ENCODE measurements at regions of chr2 and their contacts with region 1.

Region 1: DNA sequence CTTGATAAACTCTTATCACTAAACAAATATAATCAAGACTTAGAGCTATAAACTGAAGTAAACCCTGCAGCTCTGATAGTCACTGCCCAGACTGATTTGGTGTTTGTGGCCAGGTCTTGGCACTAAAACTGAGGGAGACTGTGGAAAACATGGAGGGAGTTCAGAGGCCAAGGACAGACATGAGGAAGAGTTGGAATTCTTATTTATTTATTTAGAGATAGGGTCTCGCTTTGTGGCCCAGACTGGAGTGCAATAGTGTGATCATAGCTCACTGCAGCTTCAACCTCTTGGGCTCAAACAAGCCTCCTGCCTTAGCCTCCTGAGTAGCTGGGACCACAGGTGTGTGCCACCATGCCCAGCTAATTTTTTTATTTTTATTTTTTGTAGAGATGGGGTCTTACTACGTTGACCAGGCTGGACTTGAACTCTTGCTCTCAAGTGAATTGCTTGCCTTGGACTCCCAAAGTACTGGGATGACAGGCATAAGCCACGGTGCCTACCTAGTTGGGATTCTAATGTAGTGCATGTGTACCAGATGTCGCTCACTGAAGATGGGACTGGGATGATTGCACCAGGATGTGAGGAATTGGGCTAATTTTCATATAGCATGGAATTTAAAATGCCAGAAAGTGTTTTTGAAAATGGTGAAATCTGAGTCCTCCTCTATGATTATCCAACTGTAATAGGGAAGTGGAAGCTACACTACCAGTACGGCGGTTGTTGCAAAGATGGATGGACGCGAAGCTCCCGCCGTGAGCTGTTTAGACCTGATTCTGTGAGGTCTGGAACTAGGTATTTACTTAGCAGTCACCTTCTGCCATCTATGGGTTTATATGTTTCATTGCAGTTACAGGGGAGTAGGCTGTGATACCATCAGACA is 52.7 kb upstream of the CTLA4 start:
- DNase-seq: peak; percentile 48 to 51
- ATAC-seq: peak; percentile 59 to 92 (median 84)
- H3K4me3 ChIP-seq: peak overlapping the region in 3 of 10 donors; percentile 20 to 31 (median 28)
- H3K27ac ChIP-seq: peak overlapping the region in 8 of 10 donors; percentile 8 to 68 (median 38)
- H3K4me1 ChIP-seq: peaks cover 0 to 51% (median 16%) of the 10 kb centered on the region in 9 donors
- H3K27me3 ChIP-seq: no peaks in the 10 kb centered on the region
- CTCF ChIP-seq: peak; percentile 73 to 88 (median 83)

Region 2: GRCh38 chr2:203225423-203226039 is 589.4 kb before region 1 on chr2:
- intact Hi-C with region 1: loop called in 3 of 10 experiments (anchors 10 kb)
- DNase-seq: no peak
- ATAC-seq: peak in 2 of 8 donors; percentile 48 to 57
- H3K4me3 ChIP-seq: no peak overlapping the region
- H3K27ac ChIP-seq: no peak overlapping the region
- H3K4me1 ChIP-seq: no peaks in the 10 kb centered on the region
- H3K27me3 ChIP-seq: no peaks in the 10 kb centered on the region
- CTCF ChIP-seq: peak; percentile 39 to 66 (median 60)

Region 3: DNA sequence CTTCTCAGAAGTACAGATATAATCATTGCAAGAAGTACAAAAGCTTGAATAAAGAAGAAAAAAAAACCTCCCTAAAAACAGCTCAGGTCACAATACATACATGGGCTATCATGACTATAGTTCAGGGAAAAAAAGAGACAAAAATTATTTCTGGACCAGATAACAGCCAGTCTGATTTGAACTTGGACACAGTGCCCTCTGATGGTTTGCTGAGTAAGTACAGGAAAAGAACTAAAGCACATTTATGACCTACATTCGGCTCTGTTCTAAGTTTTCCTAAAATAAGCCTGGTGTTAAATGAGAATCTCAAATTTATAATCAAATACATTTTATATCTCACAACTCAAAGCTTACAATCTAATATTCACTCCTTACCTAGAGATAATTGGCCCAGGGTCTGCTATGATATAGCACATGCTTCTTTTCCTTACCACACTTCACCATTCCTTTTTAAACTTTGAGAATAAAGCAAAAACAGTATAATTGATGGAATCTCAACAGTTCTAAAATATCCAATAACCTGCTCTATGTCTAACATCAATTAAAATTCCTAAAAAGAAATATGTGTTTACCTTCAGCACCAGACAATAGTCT is 360.9 kb before region 1 on chr2:
- intact Hi-C with region 1: loop called in 1 of 10 experiments (anchors 10 kb)
- DNase-seq: peak in 1 of 2 donors; percentile 36
- ATAC-seq: peak; percentile 44 to 75 (median 68)
- H3K4me3 ChIP-seq: no peak overlapping the region
- H3K27ac ChIP-seq: peak overlapping the region in 2 of 10 donors; percentile 14 to 26
- H3K4me1 ChIP-seq: peaks cover 0 to 34% (median 15%) of the 10 kb centered on the region in 9 donors
- H3K27me3 ChIP-seq: no peaks in the 10 kb centered on the region
- CTCF ChIP-seq: peak; percentile 29 to 88 (median 75)

Region 4: GRCh38 chr2:203650860-203651613 is 163.9 kb before region 1 on chr2:
- intact Hi-C with region 1: loop called in 4 of 10 experiments (anchors 10 kb)
- DNase-seq: peak in 1 of 2 donors; percentile 42
- ATAC-seq: peak; percentile 70 to 85 (median 82)
- H3K4me3 ChIP-seq: no peak overlapping the region
- H3K27ac ChIP-seq: peak overlapping the region in 9 of 10 donors; percentile 6 to 82 (median 58)
- H3K4me1 ChIP-seq: peaks cover 5 to 41% (median 31%) of the 10 kb centered on the region in 9 donors
- H3K27me3 ChIP-seq: no peaks in the 10 kb centered on the region
- CTCF ChIP-seq: peak in 8 of 9 donors; percentile 12 to 61 (median 46)

Region 5: GRCh38 chr2:203774760-203775159 is 40.1 kb before region 1 on chr2:
- intact Hi-C with region 1: no loop called
- DNase-seq: no peak
- ATAC-seq: no peak
- H3K4me3 ChIP-seq: no peak overlapping the region
- H3K27ac ChIP-seq: no peak overlapping the region
- H3K4me1 ChIP-seq: no peaks in the 10 kb centered on the region
- H3K27me3 ChIP-seq: no peaks in the 10 kb centered on the region
- CTCF ChIP-seq: no peak

Region 6: GRCh38 chr2:203799908-203800307 is 15.0 kb before region 1 on chr2:
- intact Hi-C with region 1: no loop called
- DNase-seq: no peak
- ATAC-seq: no peak
- H3K4me3 ChIP-seq: no peak overlapping the region
- H3K27ac ChIP-seq: no peak overlapping the region
- H3K4me1 ChIP-seq: peaks cover 0 to 48% (median 0%) of the 10 kb centered on the region in 9 donors
- H3K27me3 ChIP-seq: no peaks in the 10 kb centered on the region
- CTCF ChIP-seq: no peak

Region 7: DNA sequence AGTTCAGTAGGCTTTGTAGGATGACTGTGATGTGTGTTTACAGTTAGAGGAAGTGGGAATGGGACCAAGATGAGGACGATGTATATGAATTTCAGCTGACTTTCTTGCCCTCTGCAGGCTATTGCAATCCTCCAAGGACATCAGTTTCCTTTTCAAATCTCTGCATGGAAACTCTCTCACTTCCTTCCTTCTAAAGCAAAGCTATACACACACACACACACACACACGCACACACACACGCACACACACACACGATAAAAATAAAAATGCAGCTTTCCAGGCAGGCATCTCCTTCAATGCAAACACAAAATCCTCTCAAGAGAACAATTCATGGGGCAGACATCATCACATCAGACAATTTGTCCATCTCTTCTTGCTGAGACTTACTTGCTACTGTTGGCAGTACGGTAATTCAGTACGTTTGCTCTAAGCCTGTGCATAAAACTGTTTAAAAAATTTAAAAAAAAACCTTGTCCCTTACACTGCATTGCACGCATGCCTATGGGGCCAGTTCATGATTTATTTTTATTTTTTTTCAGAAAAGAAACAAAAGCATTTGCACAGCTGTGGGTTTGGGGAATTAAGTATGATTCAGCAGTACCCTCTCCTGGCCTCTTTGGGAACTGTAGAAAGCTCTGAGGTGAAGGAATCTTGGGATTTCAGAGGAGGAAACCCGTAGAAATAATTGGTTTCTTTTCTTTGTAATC is 94.5 kb after region 1 on chr2:
- intact Hi-C with region 1: loop called in 3 of 10 experiments (anchors 5 to 10 kb)
- DNase-seq: peak in 1 of 2 donors; percentile 63
- ATAC-seq: peak; percentile 82 to 94 (median 86)
- H3K4me3 ChIP-seq: peak overlapping the region in 7 of 10 donors; percentile 19 to 48 (median 35)
- H3K27ac ChIP-seq: peak overlapping the region in 6 of 10 donors; percentile 20 to 86 (median 48)
- H3K4me1 ChIP-seq: peaks cover 3 to 28% (median 7%) of the 10 kb centered on the region in 9 donors
- H3K27me3 ChIP-seq: no peaks in the 10 kb centered on the region
- CTCF ChIP-seq: peak; percentile 50 to 89 (median 82)

Measured in heart right ventricle (tissue), 16 donors.